H1 (cell line): ENCODE measurements at regions of chr5 and their contacts with region 1.

Region 1: DNA sequence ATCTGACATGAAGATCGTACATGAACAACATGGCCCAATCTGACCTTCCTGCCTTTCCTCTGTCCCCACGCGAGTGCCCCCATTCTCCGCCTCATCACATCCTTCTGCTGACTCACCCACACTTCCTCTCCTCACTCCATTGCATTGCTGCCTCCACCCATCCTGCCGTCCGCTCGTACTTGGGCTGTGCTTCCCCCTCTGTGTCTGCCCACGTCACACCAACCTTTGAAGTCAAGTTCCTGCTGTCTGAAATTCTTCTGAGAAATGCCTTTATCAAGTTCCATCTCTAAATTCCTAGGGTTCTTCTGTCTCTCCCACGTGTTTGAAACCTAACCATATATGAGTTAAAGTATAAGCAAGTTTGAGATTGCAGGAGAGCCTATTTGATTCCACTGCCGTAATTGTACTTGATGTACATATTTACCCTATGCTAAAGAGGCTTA is 18.0 kb upstream of the STARD4 start:
- DNase-seq: no peak
- H3K4me3 ChIP-seq: no peak overlapping the region
- H3K27ac ChIP-seq: no peak overlapping the region
- H3K4me1 ChIP-seq: no peaks in the 10 kb centered on the region
- H3K27me3 ChIP-seq: no peaks in the 10 kb centered on the region
- CTCF ChIP-seq: no peak
- EP300 ChIP-seq: no peak
- POLR2A ChIP-seq: no peak
- RAD21 ChIP-seq: no peak

Region 2: GRCh38 chr5:111394580-111394979 is 135.7 kb before region 1 on chr5:
- CTCF ChIA-PET with region 1: no interaction called
- POLR2A ChIA-PET with region 1: no interaction called
- DNase-seq: no peak
- H3K4me3 ChIP-seq: no peak overlapping the region
- H3K27ac ChIP-seq: no peak overlapping the region
- H3K4me1 ChIP-seq: no peaks in the 10 kb centered on the region
- H3K27me3 ChIP-seq: no peaks in the 10 kb centered on the region
- CTCF ChIP-seq: no peak
- EP300 ChIP-seq: no peak
- POLR2A ChIP-seq: no peak
- RAD21 ChIP-seq: no peak

Region 3: GRCh38 chr5:111512375-111513130 is 17.8 kb before region 1 on chr5 and contains the start of gene STARD4:
- CTCF ChIA-PET with region 1: interaction called, 27 read pairs
- POLR2A ChIA-PET with region 1: interaction called, 3 read pairs
- DNase-seq: peak; percentile 85 to 91
- H3K4me3 ChIP-seq: peak within 1 kb of the TSS; percentile 83 to 96 (median 92)
- H3K27ac ChIP-seq: peak within 1 kb of the TSS; percentile 73
- H3K4me1 ChIP-seq: peaks cover 0 to 11% (median 4%) of the 10 kb centered on the region in 4 experiments; a peak in 3 of 7 replicates
- H3K27me3 ChIP-seq: no peaks in the 10 kb centered on the region
- CTCF ChIP-seq: no peak
- EP300 ChIP-seq: peak in 1 of 2 experiments; percentile 74; a peak in 1 of 3 replicates
- POLR2A ChIP-seq: peak; percentile 82 to 84
- RAD21 ChIP-seq: no peak
- total RNA-seq, gene STARD4: 47.4 and 47.9 TPM in 2 replicates

Region 4: DNA sequence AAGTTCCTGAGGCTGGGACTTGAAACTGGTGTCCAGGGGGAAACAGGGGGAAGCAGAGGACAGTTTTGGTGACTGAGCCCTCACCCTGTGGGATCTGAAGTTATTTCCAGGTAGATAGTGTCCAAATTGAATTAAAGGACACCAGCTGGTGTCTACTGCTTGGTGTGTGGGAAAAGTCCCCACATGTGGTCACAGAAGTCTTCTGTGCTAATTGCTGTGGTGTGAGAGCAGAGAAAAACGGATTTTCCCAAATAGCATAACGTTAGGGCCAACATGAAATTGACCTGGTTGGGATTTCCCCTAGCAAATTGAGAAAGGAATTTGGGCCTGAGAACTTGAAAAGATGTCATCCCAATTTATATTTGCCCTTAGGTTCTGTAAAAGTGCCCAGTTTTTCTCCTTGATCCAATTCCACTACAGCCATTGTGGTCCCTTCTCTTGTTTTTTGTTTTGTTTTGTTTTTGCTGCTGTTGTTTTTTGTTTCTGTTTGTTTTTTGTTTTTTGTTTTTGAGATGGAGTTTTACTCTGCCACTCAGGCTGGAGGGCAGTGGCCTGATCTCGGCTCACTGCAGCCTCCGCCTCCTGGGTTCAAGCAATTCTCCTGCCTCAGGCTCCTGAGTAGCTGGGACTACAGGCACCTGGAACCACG is 12.3 kb before region 1 on chr5:
- CTCF ChIA-PET with region 1: interaction called, 50 read pairs
- POLR2A ChIA-PET with region 1: interaction called, 3 read pairs
- DNase-seq: no peak
- H3K4me3 ChIP-seq: no peak overlapping the region
- H3K27ac ChIP-seq: no peak overlapping the region
- H3K4me1 ChIP-seq: peaks cover 0 to 8% (median 3%) of the 10 kb centered on the region in 4 experiments; a peak in 3 of 7 replicates
- H3K27me3 ChIP-seq: no peaks in the 10 kb centered on the region
- CTCF ChIP-seq: no peak
- EP300 ChIP-seq: no peak
- POLR2A ChIP-seq: no peak
- RAD21 ChIP-seq: no peak

Region 5: DNA sequence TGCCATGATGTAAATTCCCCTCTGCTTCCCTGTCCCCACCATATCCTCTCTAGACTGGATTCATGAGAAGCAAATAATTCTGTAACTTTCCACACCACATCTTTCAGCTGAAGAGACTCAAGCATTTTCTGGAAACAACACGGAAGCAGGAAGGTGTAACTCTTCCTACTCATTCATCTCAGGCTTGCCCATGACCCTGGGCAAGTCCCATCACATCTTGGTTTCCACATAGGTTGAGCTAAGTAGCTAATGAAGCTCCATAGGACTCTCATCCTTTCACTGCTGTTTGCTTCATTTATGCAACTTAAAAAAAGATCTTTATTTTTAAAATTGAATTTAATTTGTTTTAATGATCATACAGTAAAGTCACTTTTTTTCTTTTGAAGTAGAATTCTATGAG is 14.7 kb after region 1 on chr5:
- CTCF ChIA-PET with region 1: interaction called, 37 read pairs
- POLR2A ChIA-PET with region 1: no interaction called
- DNase-seq: no peak
- H3K4me3 ChIP-seq: no peak overlapping the region
- H3K27ac ChIP-seq: no peak overlapping the region
- H3K4me1 ChIP-seq: no peaks in the 10 kb centered on the region
- H3K27me3 ChIP-seq: no peaks in the 10 kb centered on the region
- CTCF ChIP-seq: no peak
- EP300 ChIP-seq: no peak
- POLR2A ChIP-seq: no peak
- RAD21 ChIP-seq: no peak

Region 6: DNA sequence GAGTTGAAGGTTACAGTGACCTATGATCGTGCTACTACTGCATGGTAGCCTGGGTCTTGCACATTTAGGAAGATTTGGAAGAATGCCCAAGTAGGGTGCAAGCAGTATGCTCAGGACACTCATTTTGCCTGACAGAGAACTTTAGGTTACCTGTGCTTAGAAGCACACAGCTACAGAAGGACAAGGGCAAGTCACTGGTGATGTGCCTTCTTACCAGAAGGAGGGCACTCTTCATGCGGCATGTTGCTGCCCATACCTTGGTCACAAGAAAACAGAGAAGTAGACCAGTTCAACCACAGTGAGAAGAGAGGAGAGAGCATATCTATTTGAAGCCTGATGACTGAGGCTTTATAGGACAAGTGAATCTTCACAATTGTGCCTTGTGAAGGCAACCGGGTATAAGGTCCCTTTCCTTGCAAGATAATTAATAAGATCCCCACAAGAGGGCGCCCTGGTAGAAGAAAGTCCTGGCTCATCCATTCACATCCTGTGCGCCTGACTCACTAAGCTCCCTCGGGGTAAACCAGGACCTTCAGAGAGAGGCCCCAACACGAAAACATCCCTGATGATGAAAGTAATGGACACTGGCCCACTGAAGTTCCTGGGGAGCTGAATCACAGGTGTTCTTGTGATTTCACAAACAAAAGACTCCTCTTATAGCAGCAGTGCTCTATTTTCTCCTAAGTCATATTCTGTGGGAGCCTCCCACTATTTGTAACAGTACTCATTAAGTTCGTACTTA is 20.1 kb after region 1 on chr5:
- CTCF ChIA-PET with region 1: interaction called, 37 read pairs
- POLR2A ChIA-PET with region 1: no interaction called
- DNase-seq: peak; percentile 63 to 83
- H3K4me3 ChIP-seq: no peak overlapping the region
- H3K27ac ChIP-seq: no peak overlapping the region
- H3K4me1 ChIP-seq: peaks cover 1 to 15% (median 11%) of the 10 kb centered on the region in 4 experiments; a peak in 6 of 7 replicates
- H3K27me3 ChIP-seq: no peaks in the 10 kb centered on the region
- CTCF ChIP-seq: peak; percentile 35 to 69 (median 63)
- EP300 ChIP-seq: no peak
- POLR2A ChIP-seq: no peak
- RAD21 ChIP-seq: peak; percentile 87 to 91